CD8-positive, alpha-beta T cell (primary cell): ENCODE measurements at regions of chr12 and their contacts with region 1.

Region 1: GRCh38 chr12:9813821-9814809 is 13.2 kb upstream of the KLRF1 start:
- DNase-seq: peak; percentile 85 to 98 (median 92)
- ATAC-seq: peak; percentile 98
- H3K4me3 ChIP-seq: peak overlapping the region; percentile 65 to 66
- H3K4me3 Mint-ChIP-seq: peak overlapping the region; percentile 87
- H3K27ac ChIP-seq: peak overlapping the region; percentile 38 to 59
- H3K27ac Mint-ChIP-seq: peak overlapping the region; percentile 88
- H3K4me1 ChIP-seq: peaks cover 7% of the 10 kb centered on the region
- H3K4me1 Mint-ChIP-seq: peaks cover 13% of the 10 kb centered on the region
- H3K27me3 ChIP-seq: no peaks in the 10 kb centered on the region
- H3K27me3 Mint-ChIP-seq: peaks cover 4% of the 10 kb centered on the region
- CTCF ChIP-seq: peak; percentile 82

Region 2: GRCh38 chr12:9760699-9761418 is 53.3 kb before region 1 on chr12 and contains the start of gene CD69:
- CTCF ChIA-PET with region 1: interaction called, 20 read pairs
- POLR2A ChIA-PET with region 1: interaction called, 7 read pairs
- intact Hi-C with region 1: no loop called
- DNase-seq: peak; percentile 60 to 96 (median 77)
- ATAC-seq: peak; percentile 53
- H3K4me3 ChIP-seq: peak within 1 kb of the TSS; percentile 79
- H3K4me3 Mint-ChIP-seq: peak within 1 kb of the TSS; percentile 100
- H3K27ac ChIP-seq: peak within 1 kb of the TSS; percentile 97 to 98
- H3K27ac Mint-ChIP-seq: peak within 1 kb of the TSS; percentile 96
- H3K4me1 ChIP-seq: peaks cover 51% of the 10 kb centered on the region
- H3K4me1 Mint-ChIP-seq: peaks cover 64% of the 10 kb centered on the region
- H3K27me3 ChIP-seq: no peaks in the 10 kb centered on the region
- H3K27me3 Mint-ChIP-seq: no peaks in the 10 kb centered on the region
- CTCF ChIP-seq: no peak
- total RNA-seq, gene CD69: 502 to 504 TPM

Region 3: DNA sequence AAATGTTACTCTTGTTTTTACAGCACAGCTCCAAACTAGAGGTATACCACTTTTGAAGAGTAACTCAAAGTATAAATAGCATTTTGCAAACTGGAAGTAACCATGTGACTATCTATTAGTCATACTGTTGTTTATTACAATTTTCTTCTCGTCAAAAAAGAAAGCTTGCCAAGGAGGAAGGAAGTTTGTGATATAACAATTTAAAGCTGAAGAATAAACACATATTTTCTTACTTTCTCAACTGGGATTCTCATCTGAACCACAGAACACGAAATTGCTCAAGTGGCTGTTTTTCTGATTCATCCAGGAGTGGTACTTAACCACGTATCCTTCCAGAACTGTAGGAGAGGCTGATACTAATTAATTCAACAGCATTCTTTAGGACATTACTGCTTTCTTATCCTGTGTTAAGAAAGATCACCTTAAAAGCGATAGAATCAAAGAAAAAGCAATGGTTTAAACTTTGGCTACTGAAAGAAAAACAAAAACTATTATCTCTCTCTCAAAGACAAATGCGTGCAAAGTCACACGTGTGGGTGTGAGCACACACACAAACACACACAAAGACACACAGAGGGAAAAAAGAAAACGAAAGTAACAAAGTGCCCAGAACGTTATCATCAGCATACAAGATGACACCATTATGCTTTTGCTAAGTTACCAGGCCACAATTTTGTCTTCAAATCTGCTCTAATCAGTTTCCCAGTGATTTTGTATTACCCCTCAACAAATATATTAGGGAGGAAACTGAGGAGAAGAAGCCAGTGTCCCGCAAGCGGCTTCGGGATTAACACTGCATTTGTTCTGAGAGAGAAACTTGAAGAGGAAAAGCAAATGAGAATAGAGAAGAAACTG is 55.4 kb after region 1 on chr12 and contains the start of gene CLEC2B:
- CTCF ChIA-PET with region 1: interaction called, 14 read pairs
- POLR2A ChIA-PET with region 1: interaction called, 11 read pairs
- intact Hi-C with region 1: loop called in 1 of 2 experiments (anchors 2 kb)
- DNase-seq: peak in 3 of 9 experiments; percentile 50 to 86 (median 71)
- ATAC-seq: peak; percentile 70
- H3K4me3 ChIP-seq: peak within 1 kb of the TSS; percentile 41 to 64
- H3K4me3 Mint-ChIP-seq: peak within 1 kb of the TSS; percentile 89
- H3K27ac ChIP-seq: peak within 1 kb of the TSS; percentile 79 to 92
- H3K27ac Mint-ChIP-seq: peak within 1 kb of the TSS; percentile 96
- H3K4me1 ChIP-seq: peaks cover 7% of the 10 kb centered on the region
- H3K4me1 Mint-ChIP-seq: peaks cover 36% of the 10 kb centered on the region
- H3K27me3 ChIP-seq: no peaks in the 10 kb centered on the region
- H3K27me3 Mint-ChIP-seq: no peaks in the 10 kb centered on the region
- CTCF ChIP-seq: no peak
- total RNA-seq, gene CLEC2B: 141 to 145 TPM

Region 4: GRCh38 chr12:9933958-9934357 is 119.8 kb after region 1 on chr12:
- CTCF ChIA-PET with region 1: interaction called, 15 read pairs
- POLR2A ChIA-PET with region 1: no interaction called
- intact Hi-C with region 1: no loop called
- DNase-seq: no peak
- ATAC-seq: no peak
- H3K4me3 ChIP-seq: no peak overlapping the region
- H3K4me3 Mint-ChIP-seq: no peak overlapping the region
- H3K27ac ChIP-seq: no peak overlapping the region
- H3K27ac Mint-ChIP-seq: no peak overlapping the region
- H3K4me1 ChIP-seq: no peaks in the 10 kb centered on the region
- H3K4me1 Mint-ChIP-seq: no peaks in the 10 kb centered on the region
- H3K27me3 ChIP-seq: no peaks in the 10 kb centered on the region
- H3K27me3 Mint-ChIP-seq: peaks cover 6% of the 10 kb centered on the region
- CTCF ChIP-seq: no peak

Region 5: DNA sequence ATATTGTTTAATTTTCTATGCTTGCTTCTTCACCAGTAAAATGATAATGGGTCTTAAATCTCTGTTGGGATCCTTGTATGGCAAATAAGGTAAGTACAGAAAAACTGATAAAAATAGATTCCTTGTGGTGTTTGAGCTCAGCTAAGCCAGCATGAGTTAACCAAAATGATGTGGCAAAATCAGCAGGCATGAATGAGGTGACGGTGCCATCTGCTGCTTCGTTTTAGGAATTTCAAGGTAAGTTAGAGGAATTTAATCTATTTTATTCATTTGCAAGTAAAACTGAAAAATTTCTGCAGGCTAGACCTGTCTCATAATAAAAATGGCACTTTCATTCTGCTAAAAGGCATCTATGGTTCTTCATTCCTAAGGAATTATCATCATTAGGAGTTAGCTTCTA is 325.9 kb after region 1 on chr12:
- CTCF ChIA-PET with region 1: interaction called, 11 read pairs
- POLR2A ChIA-PET with region 1: interaction called, 5 read pairs
- intact Hi-C with region 1: loop called (anchors 1 kb)
- DNase-seq: peak in 6 of 9 experiments; percentile 9 to 69 (median 46)
- ATAC-seq: peak; percentile 51
- H3K4me3 ChIP-seq: no peak overlapping the region
- H3K4me3 Mint-ChIP-seq: no peak overlapping the region
- H3K27ac ChIP-seq: no peak overlapping the region
- H3K27ac Mint-ChIP-seq: no peak overlapping the region
- H3K4me1 ChIP-seq: no peaks in the 10 kb centered on the region
- H3K4me1 Mint-ChIP-seq: peaks cover 2% of the 10 kb centered on the region
- H3K27me3 ChIP-seq: peaks cover 0 to 4% of the 10 kb centered on the region in 2 experiments
- H3K27me3 Mint-ChIP-seq: peaks cover 6% of the 10 kb centered on the region
- CTCF ChIP-seq: peak; percentile 68